MCF 10A (cell line): ENCODE measurements at regions of chr16 and their contacts with region 1.

Region 1: DNA sequence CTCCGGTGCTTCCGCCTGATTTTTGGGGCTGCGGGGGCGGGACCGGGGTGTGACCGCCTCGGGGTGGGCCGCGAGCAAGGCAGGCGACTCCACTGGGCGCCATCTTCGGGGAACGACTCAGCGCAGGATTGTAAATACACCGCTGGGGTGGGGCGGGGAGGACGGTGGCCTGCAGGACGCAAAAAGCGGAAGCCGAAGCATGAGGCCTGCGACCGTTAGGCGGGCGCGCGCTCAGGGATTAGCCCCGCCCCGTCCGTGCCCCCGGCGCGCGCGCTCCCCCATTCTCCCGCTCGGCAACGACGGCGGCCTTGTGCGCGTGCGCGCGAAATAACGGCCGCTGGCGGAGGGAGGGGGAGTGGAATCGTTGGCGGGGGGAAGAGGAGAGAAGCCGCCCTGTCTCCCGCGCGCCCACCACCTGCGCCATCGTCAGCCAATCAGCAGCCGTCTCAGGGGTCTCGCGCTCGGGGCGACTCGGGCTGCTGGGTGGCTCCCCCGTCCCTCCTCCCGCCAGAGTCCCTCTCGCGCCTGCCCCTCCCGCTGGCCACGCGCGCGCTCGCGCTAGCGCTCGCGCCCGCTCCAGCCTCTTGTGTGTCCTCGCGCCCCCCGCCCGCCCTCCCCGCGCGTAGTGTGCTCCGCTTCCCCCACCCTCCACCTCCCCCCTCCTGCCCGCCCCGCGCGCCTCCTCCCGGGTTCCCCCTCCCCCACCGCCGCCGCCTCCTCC is 791 bp upstream of the MAZ start:
- DNase-seq: peak; percentile 95
- H3K4me3 Mint-ChIP-seq: peak overlapping the region; percentile 92
- H3K27ac Mint-ChIP-seq: peak overlapping the region; percentile 98
- H3K4me1 Mint-ChIP-seq: peaks cover 29% of the 10 kb centered on the region
- H3K27me3 Mint-ChIP-seq: no peaks in the 10 kb centered on the region
- CTCF ChIP-seq: no peak

Region 2: DNA sequence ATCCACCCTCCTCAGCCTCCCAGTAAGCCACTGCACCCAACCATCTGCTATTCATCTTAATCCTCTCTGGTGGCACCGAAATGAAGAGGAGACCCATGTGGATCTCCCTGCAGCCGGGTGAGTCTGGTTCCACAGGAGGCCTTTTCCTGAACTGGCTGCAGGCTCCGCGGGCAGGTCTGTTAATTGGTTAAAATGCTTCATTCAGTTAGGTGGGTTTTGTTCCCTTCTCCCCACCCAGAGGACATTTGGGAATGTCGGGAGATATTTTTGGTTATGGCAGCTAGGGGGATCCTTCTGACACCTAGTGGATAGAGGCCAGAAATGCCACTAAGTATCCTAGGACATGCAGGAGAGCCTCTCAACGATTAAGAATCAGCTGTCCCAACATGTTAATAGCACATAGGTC is 76.4 kb before region 1 on chr16:
- CTCF ChIA-PET with region 1: no interaction called
- POLR2A ChIA-PET with region 1: no interaction called
- intact Hi-C with region 1: no loop called
- DNase-seq: peak; percentile 68
- H3K4me3 Mint-ChIP-seq: peak overlapping the region; percentile 28
- H3K27ac Mint-ChIP-seq: no peak overlapping the region
- H3K4me1 Mint-ChIP-seq: peaks cover 6% of the 10 kb centered on the region
- H3K27me3 Mint-ChIP-seq: peaks cover 33% of the 10 kb centered on the region
- CTCF ChIP-seq: peak; percentile 53

Region 3: DNA sequence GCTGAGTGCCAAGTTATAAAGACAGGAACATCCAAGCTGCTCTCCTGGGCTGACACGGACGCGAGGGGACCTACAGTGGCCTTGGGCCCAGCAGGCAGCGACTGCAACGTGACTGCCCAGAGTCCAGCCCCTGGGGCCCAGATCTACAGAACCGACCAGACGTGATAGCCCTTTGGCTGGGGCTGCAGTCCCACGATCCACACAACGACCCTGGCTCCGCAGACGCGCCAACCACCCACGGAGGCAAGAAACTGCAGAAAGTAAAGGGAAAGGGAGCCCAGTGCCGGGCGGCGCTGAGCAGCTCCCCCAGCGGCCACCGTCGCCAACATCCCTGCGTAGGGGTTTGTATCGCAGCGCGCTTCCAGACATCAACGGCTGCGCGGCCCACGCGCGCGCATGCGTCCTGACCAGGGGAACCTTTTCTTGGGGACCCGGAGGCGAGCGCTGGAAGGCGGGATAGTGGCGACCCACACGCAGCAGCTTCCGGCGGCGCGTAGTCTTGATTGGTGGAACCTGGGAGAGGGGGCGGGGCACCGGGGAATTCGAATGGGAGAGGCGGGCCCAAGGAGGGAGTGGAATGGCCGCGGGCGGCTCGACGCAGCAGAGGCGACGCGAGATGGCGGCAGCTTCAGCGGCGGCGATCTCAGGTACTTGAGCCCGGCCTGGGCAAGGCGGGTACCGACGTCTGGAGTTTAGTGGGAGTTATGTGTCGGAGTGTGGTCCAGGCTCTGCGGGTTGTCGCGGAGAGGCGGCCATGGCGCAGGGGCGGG is 15.2 kb before region 1 on chr16 and contains the start of gene KIF22:
- CTCF ChIA-PET with region 1: interaction called, 8 read pairs
- POLR2A ChIA-PET with region 1: interaction called, 94 read pairs
- intact Hi-C with region 1: loop called (anchors 1 kb)
- DNase-seq: peak; percentile 99
- H3K4me3 Mint-ChIP-seq: peak within 1 kb of the TSS; percentile 84
- H3K27ac Mint-ChIP-seq: peak within 1 kb of the TSS; percentile 89
- H3K4me1 Mint-ChIP-seq: peaks cover 28% of the 10 kb centered on the region
- H3K27me3 Mint-ChIP-seq: no peaks in the 10 kb centered on the region
- CTCF ChIP-seq: peak; percentile 59
- total RNA-seq, gene KIF22: 36.3 and 53.8 TPM in 2 replicates

Region 4: DNA sequence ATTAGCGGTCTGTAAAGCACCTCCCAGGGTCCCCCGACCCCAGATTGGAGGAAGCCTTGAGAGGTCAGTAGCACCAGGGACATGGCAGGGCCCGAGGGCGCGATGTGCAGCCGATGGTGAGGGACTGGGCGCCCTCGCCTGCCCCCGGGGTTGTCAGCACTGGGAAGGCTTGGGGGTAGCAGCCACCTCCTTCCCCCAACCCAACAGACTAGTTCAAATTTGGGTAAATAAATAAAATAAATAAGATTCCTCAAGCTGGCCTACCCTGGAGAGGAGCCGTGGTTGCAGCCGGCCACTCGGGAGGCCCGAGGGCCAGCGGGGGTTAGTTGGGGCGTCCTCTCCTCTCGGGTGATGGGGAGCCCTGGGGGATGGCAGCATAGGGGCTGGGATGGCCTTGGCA is 218.9 kb after region 1 on chr16:
- CTCF ChIA-PET with region 1: no interaction called
- POLR2A ChIA-PET with region 1: interaction called, 3 read pairs
- intact Hi-C with region 1: loop called (anchors 5 kb)
- DNase-seq: no peak
- H3K4me3 Mint-ChIP-seq: no peak overlapping the region
- H3K27ac Mint-ChIP-seq: no peak overlapping the region
- H3K4me1 Mint-ChIP-seq: no peaks in the 10 kb centered on the region
- H3K27me3 Mint-ChIP-seq: peaks cover 41% of the 10 kb centered on the region
- CTCF ChIP-seq: no peak

Region 5: GRCh38 chr16:30032083-30032819 is 226.7 kb after region 1 on chr16:
- CTCF ChIA-PET with region 1: interaction called, 11 read pairs
- POLR2A ChIA-PET with region 1: interaction called, 3 read pairs
- intact Hi-C with region 1: no loop called
- DNase-seq: peak; percentile 72
- H3K4me3 Mint-ChIP-seq: no peak overlapping the region
- H3K27ac Mint-ChIP-seq: no peak overlapping the region
- H3K4me1 Mint-ChIP-seq: no peaks in the 10 kb centered on the region
- H3K27me3 Mint-ChIP-seq: peaks cover 34% of the 10 kb centered on the region
- CTCF ChIP-seq: peak; percentile 84